Sciatic nerve (tissue), 2 donors: ENCODE measurements at regions of chr4 and their contacts with region 1.

Region 1: DNA sequence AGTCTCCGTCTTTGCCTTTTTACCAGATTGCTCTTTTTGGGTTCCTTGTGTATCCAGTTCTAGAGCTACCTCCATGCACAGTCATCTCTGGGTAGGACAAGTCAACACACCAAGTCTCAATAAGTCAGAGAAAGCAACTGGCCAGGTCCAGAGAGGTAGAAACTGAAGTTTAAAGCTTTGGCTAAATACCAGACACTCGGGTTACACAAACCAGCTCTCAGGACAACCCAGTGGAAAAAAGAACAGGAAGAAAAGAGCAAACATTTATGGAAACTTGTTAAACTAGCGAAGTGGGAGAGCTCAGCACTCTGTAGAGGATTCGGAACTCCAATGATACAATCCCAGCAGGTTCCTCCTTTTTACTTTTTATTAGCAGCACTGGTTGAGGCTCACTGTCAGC is 291.0 kb upstream of the CPEB2 start:
- DNase-seq: no peak
- ATAC-seq: no peak

Region 2: GRCh38 chr4:13698296-13698695 is 1013.0 kb before region 1 on chr4:
- intact Hi-C with region 1: loop called (anchors 5 kb)
- DNase-seq: no peak
- ATAC-seq: no peak

Region 3: DNA sequence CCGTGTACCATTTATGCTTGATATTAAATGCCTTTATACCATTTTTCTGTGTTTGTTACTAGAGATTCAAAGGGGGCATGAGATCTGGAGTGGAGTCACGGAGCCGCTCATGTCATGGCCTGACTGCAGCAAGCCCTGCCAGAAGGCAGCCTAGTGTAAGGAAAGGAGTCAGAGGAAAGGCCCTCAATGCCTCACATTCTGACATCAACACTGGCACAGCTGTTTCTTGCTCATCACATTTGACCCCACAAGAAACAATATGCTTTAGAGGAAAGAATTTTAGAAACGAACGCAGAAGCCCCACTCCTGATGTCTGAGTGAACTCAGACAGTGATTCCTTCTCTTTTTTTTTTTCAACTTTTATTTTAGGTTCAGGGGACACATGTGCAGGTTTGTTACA is 31.4 kb before region 1 on chr4:
- intact Hi-C with region 1: no loop called
- DNase-seq: no peak
- ATAC-seq: no peak